ENCODE measurements at regions of chr12 and their contacts with region 1.

Region 1: GRCh38 chr12:12654691-12655460 is 41.1 kb downstream of the GPR19 start:
- DNase-seq: no peak
- H3K4me3 ChIP-seq: no peak overlapping the region
- H3K27ac ChIP-seq: no peak overlapping the region
- H3K4me1 ChIP-seq: peaks cover 0 to 3% of the 10 kb centered on the region in 2 experiments; a peak in 2 of 4 replicates
- H3K27me3 ChIP-seq: no peaks in the 10 kb centered on the region
- CTCF ChIP-seq: no peak
- EP300 ChIP-seq: no peak
- RAD21 ChIP-seq: no peak

Region 2: DNA sequence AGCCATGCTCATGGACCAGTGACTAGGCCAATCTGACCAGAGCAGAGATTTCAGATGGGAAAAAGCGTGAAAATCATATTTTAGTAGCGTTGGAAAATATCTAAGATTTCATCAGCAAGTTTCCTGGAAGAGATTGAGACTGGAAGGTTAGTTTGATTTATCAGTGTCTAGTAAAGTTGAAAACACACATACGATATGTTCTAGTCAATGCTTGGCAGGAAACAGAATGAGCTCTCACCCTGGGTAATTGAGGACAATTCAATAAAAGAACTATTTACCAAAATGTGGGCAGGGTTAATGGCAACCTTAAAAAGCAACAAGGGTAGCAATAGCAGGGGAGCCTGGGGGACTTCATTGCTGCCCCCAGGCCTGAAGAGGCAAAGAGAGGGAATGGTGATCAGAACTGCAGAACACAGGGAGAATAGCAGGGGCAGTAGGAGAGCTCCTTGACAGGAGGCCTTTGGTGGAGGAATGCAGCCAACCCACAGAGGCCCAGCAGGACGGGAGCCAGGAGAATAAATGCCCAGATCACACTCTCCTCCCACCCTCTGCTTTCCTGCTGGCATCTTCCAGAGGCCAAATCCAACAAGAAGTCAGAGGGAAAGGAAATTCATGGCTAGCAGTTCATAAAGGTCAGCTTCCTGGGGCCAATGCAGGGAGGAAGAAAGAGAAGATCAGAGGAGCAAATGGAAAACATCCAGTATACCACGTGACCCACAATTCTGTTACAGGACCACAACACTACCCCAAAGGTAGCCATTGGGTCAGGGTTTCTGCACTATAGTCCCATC is 360.5 kb before region 1 on chr12:
- CTCF ChIA-PET with region 1: no interaction called
- POLR2A ChIA-PET with region 1: no interaction called
- DNase-seq: no peak
- H3K4me3 ChIP-seq: no peak overlapping the region
- H3K27ac ChIP-seq: no peak overlapping the region
- H3K4me1 ChIP-seq: peaks cover 0 to 3% of the 10 kb centered on the region in 2 experiments; a peak in 1 of 4 replicates
- H3K27me3 ChIP-seq: no peaks in the 10 kb centered on the region
- CTCF ChIP-seq: no peak
- EP300 ChIP-seq: no peak
- RAD21 ChIP-seq: no peak

Region 3: DNA sequence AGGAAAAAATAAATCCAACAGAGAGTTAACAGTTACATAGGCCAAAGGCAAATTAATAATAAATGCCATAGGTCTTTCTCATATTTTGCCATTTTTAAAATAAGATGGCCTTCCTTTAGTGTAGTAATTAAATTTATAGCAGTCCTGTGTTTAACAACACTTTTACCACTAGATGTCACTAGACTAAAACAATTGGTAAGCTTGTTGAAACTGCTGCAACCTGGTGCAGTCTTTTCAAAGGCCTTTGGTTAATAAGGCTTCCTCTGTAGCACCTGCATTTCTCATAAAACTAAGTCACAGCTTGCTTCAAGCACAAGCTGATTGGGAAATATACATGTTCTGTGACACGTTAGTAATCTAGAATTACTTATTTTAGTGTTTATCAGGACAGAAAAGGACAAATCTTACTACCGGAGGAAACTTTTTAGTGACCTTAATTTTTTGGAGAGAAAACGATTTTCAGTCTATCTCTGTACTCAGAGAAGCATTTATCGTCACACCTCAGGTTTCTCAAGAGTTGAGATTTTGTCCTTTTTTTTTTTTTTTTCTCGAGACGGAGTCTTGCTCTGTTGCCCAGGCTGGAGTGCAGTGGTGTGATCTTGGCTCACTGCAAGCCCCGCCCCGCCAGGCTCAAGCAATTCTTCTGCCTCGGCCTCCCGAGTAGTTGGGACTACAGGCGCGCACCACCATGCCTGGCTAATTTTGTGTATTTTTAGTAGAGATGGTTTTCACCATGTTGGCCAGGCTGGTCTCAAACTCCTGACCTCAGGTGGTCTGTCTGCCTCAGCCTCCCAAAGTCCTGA is 278.0 kb before region 1 on chr12:
- CTCF ChIA-PET with region 1: interaction called, 40 read pairs
- POLR2A ChIA-PET with region 1: no interaction called
- DNase-seq: peak; percentile 66
- H3K4me3 ChIP-seq: no peak overlapping the region; a peak in 1 of 4 replicates
- H3K27ac ChIP-seq: no peak overlapping the region
- H3K4me1 ChIP-seq: peaks cover 0 to 7% of the 10 kb centered on the region in 2 experiments; a peak in 1 of 4 replicates
- H3K27me3 ChIP-seq: no peaks in the 10 kb centered on the region
- CTCF ChIP-seq: peak; percentile 84
- EP300 ChIP-seq: no peak
- RAD21 ChIP-seq: peak; percentile 100

Region 4: DNA sequence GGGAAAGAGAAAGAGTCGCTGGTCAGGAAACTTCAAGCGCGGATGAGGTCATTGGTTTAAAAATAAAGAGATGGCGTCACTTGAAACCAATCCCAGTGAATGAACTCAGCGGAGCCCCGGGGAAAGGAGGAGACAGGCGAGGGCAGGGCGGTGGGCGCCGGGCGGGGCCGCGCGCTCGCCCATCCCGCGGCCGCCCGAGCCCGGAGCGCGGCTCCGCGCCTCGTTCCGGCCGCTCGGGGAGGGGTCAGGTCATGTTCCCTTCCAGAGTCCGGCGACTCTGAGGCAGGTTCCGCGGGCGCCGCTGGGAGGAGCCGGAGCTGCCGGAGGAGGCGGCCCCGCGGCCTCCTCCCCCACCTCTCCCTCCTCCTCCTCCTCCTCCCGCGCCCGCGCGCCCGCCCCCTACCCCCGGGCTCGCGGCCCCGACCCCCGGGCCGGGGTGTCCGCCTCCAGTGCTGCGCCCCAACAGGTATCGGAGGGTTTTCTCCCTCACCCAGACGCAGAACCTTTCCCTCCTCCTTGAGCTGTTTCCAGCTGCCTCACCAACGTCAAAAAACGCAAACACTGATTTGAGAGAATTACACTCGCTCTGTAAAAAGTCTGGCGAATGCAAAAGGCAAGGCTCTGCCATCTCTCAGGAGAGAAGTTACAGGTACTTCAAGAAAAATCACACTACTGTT is 92.2 kb before region 1 on chr12 and contains the start of gene DUSP16:
- CTCF ChIA-PET with region 1: interaction called, 23 read pairs
- POLR2A ChIA-PET with region 1: no interaction called
- DNase-seq: peak; percentile 95
- H3K4me3 ChIP-seq: peak within 1 kb of the TSS; percentile 75 to 93
- H3K27ac ChIP-seq: peak within 1 kb of the TSS; percentile 94 to 96
- H3K4me1 ChIP-seq: peaks cover 8 to 17% of the 10 kb centered on the region in 2 experiments; a peak in 3 of 4 replicates
- H3K27me3 ChIP-seq: no peaks in the 10 kb centered on the region
- CTCF ChIP-seq: no peak; the same call in 1 of the 2 replicates
- EP300 ChIP-seq: 0 out of 4 replicates have a peak, but pooled peaks of 1 of the 2 experiments have one; percentile 4
- RAD21 ChIP-seq: no peak
- polyA plus RNA-seq, gene DUSP16: 7.1 and 8.5 TPM in 2 replicates

Region 5: GRCh38 chr12:12668005-12668404 is 13.1 kb after region 1 on chr12:
- CTCF ChIA-PET with region 1: interaction called, 15 read pairs
- POLR2A ChIA-PET with region 1: no interaction called
- DNase-seq: no peak
- H3K4me3 ChIP-seq: no peak overlapping the region
- H3K27ac ChIP-seq: no peak overlapping the region
- H3K4me1 ChIP-seq: 0 out of 4 replicates have a peak, but pooled peaks cover 0 to 4% of the 10 kb centered on the region in 2 experiments
- H3K27me3 ChIP-seq: no peaks in the 10 kb centered on the region
- CTCF ChIP-seq: no peak
- EP300 ChIP-seq: no peak
- RAD21 ChIP-seq: no peak